H1 (cell line): ENCODE measurements at regions of chr10 and their contacts with region 1.

Region 1: GRCh38 chr10:88990384-88991160 is at the start of gene FAS:
- DNase-seq: peak in 1 of 2 experiments; percentile 74
- H3K4me3 ChIP-seq: peak within 1 kb of the TSS; percentile 68 to 88 (median 87)
- H3K27ac ChIP-seq: peak within 1 kb of the TSS; percentile 30; the same call in 1 of the 2 replicates
- H3K4me1 ChIP-seq: peaks cover 0 to 9% (median 1%) of the 10 kb centered on the region in 4 experiments; a peak in 3 of 7 replicates
- H3K27me3 ChIP-seq: peaks cover 0 to 13% (median 7%) of the 10 kb centered on the region in 4 experiments; a peak in 6 of 7 replicates
- CTCF ChIP-seq: no peak
- EP300 ChIP-seq: no peak
- POLR2A ChIP-seq: 0 out of 3 replicates have a peak, but pooled peaks of 1 of the 2 experiments have one; percentile 39
- RAD21 ChIP-seq: no peak
- total RNA-seq, gene FAS: 4.0 and 5.4 TPM in 2 replicates

Region 2: DNA sequence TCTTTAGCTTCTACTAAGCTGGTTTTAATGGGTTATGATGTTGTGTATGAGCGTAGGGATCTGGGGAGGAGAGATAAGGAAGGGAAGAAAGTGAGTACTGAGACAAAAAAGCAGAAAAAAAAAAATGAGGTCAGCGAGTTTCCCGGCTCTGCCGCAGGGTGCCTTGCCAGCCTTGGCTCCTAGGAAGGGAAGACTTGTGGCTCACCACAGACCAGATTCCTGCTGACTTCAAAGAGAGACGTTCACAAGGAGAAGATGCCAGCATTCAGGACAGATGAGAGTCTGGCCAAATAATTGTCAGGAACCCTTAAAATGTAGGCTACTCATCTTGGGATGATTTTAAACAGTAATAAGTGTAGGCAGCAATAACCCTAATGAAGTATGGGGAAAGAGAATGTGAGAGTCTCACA is 11.4 kb before region 1 on chr10:
- CTCF ChIA-PET with region 1: interaction called, 14 read pairs
- POLR2A ChIA-PET with region 1: no interaction called
- DNase-seq: no peak
- H3K4me3 ChIP-seq: no peak overlapping the region
- H3K27ac ChIP-seq: no peak overlapping the region
- H3K4me1 ChIP-seq: no peaks in the 10 kb centered on the region
- H3K27me3 ChIP-seq: no peaks in the 10 kb centered on the region
- CTCF ChIP-seq: no peak
- EP300 ChIP-seq: no peak
- POLR2A ChIP-seq: no peak
- RAD21 ChIP-seq: no peak

Region 3: GRCh38 chr10:89129911-89130310 is 139.3 kb after region 1 on chr10:
- CTCF ChIA-PET with region 1: no interaction called
- POLR2A ChIA-PET with region 1: no interaction called
- DNase-seq: no peak
- H3K4me3 ChIP-seq: no peak overlapping the region
- H3K27ac ChIP-seq: no peak overlapping the region
- H3K4me1 ChIP-seq: no peaks in the 10 kb centered on the region
- H3K27me3 ChIP-seq: no peaks in the 10 kb centered on the region
- CTCF ChIP-seq: no peak
- EP300 ChIP-seq: no peak
- POLR2A ChIP-seq: no peak
- RAD21 ChIP-seq: no peak